ENCODE measurements at regions of chr6 and their contacts with region 1.

Region 1: DNA sequence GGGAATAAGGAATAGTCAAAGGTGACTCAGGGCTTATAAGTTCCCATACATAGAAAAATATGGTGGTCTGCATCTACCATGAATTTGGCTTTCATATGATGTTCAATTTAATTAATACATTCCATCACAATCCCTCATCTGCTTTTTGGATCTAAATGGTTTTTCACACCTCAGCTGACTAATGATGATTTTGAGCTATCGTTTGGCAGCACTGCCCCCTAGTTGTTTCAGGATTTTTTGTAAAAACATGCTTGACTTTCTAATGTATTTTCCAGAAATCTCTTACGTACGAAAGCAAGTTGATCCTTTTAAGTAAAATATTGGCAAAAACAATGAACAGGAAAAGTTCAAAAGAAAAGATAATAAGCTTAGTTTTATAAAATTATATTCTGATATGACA is 408.6 kb upstream of the ADGRB3 start:
- DNase-seq: no peak
- ATAC-seq: no peak
- H3K4me3 ChIP-seq: no peak overlapping the region
- H3K27ac ChIP-seq: no peak overlapping the region
- H3K4me1 ChIP-seq: no peaks in the 10 kb centered on the region
- H3K27me3 ChIP-seq: no peaks in the 10 kb centered on the region
- CTCF ChIP-seq: peak; percentile 31; the same call in 1 of the 2 replicates

Region 2: DNA sequence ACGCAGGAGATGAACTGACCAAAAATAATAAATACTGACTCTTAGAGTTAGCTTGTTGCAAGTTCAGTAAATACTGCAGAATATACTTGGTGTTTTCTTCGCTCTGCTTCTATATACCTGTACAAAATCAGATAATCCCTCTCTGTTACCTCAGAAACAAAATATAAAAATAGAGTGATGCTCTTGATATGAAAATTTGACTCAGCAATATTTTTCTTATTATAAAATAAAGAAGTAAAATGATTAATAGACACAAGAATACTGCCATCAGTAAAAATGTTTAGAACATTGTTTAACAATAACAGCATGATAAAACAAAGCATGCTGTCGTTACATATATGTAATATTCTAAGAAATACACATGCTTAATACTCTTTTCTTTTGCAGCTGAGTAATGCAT is 1152.5 kb before region 1 on chr6:
- CTCF ChIA-PET with region 1: no interaction called
- POLR2A ChIA-PET with region 1: no interaction called
- in situ Hi-C with region 1: no loop called
- intact Hi-C with region 1: loop called (anchors 10 kb)
- DNase-seq: no peak
- ATAC-seq: no peak
- H3K4me3 ChIP-seq: no peak overlapping the region
- H3K27ac ChIP-seq: no peak overlapping the region
- H3K4me1 ChIP-seq: no peaks in the 10 kb centered on the region
- H3K27me3 ChIP-seq: no peaks in the 10 kb centered on the region
- CTCF ChIP-seq: no peak

Measured in Panc1 (cell line).